ENCODE measurements at regions of chr1 and their contacts with region 1.

Region 1: GRCh38 chr1:204989266-204990058 is 53.5 kb upstream of the CNTN2 start:
- DNase-seq: peak; percentile 63 to 96
- ATAC-seq: peak; percentile 76 to 90
- H3K4me3 ChIP-seq: no peak overlapping the region
- H3K27ac ChIP-seq: no peak overlapping the region
- H3K4me1 ChIP-seq: no peaks in the 10 kb centered on the region
- CTCF ChIP-seq: peak; percentile 93
- EP300 ChIP-seq: no peak
- POLR2A ChIP-seq: no peak
- RAD21 ChIP-seq: peak; percentile 92 to 97

Region 2: DNA sequence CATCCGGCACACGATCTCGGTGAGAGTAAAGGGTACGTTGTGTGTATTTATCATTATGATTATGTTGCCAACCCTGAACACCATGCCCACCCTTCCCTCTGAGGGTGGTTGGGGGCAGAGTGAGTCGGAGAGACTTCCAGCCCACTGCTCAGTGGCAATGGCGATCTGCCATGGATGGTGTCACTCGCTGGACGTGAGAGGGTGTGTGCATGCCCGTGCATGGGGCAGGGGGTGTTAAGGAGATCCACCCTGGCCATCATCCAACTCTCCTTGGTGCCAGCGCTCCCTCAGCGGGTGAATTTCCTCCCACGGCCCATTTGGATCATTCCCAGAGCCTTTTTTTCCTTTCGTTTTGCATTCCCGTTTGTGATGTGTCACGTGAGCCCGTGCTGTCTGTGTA is 20.5 kb before region 1 on chr1:
- CTCF ChIA-PET with region 1: interaction called, 105 read pairs
- POLR2A ChIA-PET with region 1: no interaction called
- DNase-seq: no peak
- ATAC-seq: no peak
- H3K4me3 ChIP-seq: no peak overlapping the region
- H3K27ac ChIP-seq: no peak overlapping the region
- H3K4me1 ChIP-seq: peaks cover 12% of the 10 kb centered on the region
- CTCF ChIP-seq: no peak
- EP300 ChIP-seq: no peak
- POLR2A ChIP-seq: no peak
- RAD21 ChIP-seq: no peak

Region 3: DNA sequence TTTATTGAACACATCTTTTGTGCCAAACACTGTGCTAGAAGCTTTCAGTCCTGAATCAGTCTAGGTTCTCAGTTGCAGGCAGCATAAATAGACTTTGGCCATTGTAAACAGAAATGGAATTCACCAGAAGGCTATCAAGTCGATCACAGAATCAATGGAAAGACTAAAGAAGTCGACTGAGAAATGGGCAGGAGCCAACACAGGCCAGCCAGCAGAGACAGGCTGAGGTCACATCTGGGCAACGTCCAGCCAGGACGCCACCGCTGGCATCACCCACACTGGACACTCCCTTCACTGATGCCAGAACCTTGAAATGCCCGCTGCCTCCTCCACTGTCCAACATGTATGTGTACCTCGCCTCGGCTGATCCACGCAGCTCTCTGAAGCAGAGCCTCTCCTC is 48.1 kb after region 1 on chr1:
- CTCF ChIA-PET with region 1: interaction called, 21 read pairs
- POLR2A ChIA-PET with region 1: no interaction called
- DNase-seq: no peak
- ATAC-seq: no peak
- H3K4me3 ChIP-seq: no peak overlapping the region
- H3K27ac ChIP-seq: no peak overlapping the region
- H3K4me1 ChIP-seq: no peaks in the 10 kb centered on the region
- CTCF ChIP-seq: no peak
- EP300 ChIP-seq: no peak
- POLR2A ChIP-seq: no peak
- RAD21 ChIP-seq: no peak

Region 4: GRCh38 chr1:205077158-205077933 is 87.9 kb after region 1 on chr1:
- CTCF ChIA-PET with region 1: interaction called, 15 read pairs
- POLR2A ChIA-PET with region 1: no interaction called
- DNase-seq: no peak
- ATAC-seq: no peak
- H3K4me3 ChIP-seq: no peak overlapping the region
- H3K27ac ChIP-seq: no peak overlapping the region
- H3K4me1 ChIP-seq: no peaks in the 10 kb centered on the region
- CTCF ChIP-seq: no peak
- EP300 ChIP-seq: no peak
- POLR2A ChIP-seq: no peak
- RAD21 ChIP-seq: no peak

Region 5: GRCh38 chr1:205141236-205142101 is 152.0 kb after region 1 on chr1:
- CTCF ChIA-PET with region 1: interaction called, 15 read pairs
- POLR2A ChIA-PET with region 1: no interaction called
- DNase-seq: peak; percentile 76 to 83
- ATAC-seq: peak; percentile 88 to 94
- H3K4me3 ChIP-seq: no peak overlapping the region
- H3K27ac ChIP-seq: peak overlapping the region in 1 of 2 experiments; percentile 63; a peak in 2 of 6 replicates
- H3K4me1 ChIP-seq: peaks cover 16% of the 10 kb centered on the region
- CTCF ChIP-seq: peak; percentile 82
- EP300 ChIP-seq: no peak
- POLR2A ChIP-seq: no peak
- RAD21 ChIP-seq: peak; percentile 52 to 59; a peak in 4 of 5 replicates

Region 6: GRCh38 chr1:205255941-205256780 is 266.7 kb after region 1 on chr1:
- CTCF ChIA-PET with region 1: interaction called, 220 read pairs
- POLR2A ChIA-PET with region 1: no interaction called
- DNase-seq: peak; percentile 82
- ATAC-seq: peak; percentile 91 to 97
- H3K4me3 ChIP-seq: no peak overlapping the region
- H3K27ac ChIP-seq: peak overlapping the region in 1 of 2 experiments; percentile 51; a peak in 3 of 6 replicates
- H3K4me1 ChIP-seq: peaks cover 16% of the 10 kb centered on the region
- CTCF ChIP-seq: peak; percentile 95
- EP300 ChIP-seq: no peak
- POLR2A ChIP-seq: no peak
- RAD21 ChIP-seq: peak; percentile 97 to 100